ENCODE measurements at regions of chr11 and their contacts with region 1.

Region 1: DNA sequence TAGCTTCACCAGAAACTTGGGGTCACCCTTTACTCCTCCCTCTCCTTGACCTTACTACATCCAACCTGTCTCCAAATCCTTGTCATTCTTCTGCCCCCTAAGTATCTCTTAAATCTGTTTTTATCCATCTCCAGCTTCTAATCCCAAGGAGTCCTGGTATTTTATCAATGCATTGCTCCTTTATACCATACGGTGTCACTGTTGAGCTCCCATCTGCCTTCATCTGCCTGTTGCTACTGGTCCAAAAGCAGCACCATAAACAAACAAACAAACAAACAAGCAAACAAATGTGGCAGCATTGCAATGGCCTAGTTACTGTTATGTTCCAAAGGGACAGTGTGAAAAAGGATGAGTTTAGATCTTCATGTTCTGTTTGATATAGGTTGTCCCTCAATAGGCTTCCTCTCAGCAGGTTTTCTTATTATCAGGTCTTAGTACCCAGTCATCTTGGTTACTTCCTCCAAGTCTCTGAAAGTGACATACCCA is 34.2 kb downstream of the DNHD1 start:
- DNase-seq: no peak
- H3K4me3 ChIP-seq: no peak overlapping the region
- H3K27ac ChIP-seq: no peak overlapping the region; the same call in 1 of the 2 replicates
- H3K4me1 ChIP-seq: no peaks in the 10 kb centered on the region
- H3K27me3 ChIP-seq: no peaks in the 10 kb centered on the region
- CTCF ChIP-seq: peak in 2 of 3 experiments; percentile 76 to 80; a peak in 3 of 4 replicates
- EP300 ChIP-seq: no peak
- POLR2A ChIP-seq: no peak
- RAD21 ChIP-seq: peak; percentile 81 to 84

Region 2: GRCh38 chr11:6505577-6506240 is 25.6 kb before region 1 on chr11:
- CTCF ChIA-PET with region 1: interaction called, 10 read pairs
- POLR2A ChIA-PET with region 1: no interaction called
- DNase-seq: no peak
- H3K4me3 ChIP-seq: no peak overlapping the region
- H3K27ac ChIP-seq: no peak overlapping the region
- H3K4me1 ChIP-seq: no peaks in the 10 kb centered on the region
- H3K27me3 ChIP-seq: no peaks in the 10 kb centered on the region
- CTCF ChIP-seq: peak in 2 of 3 experiments; percentile 46 to 86; a peak in 2 of 4 replicates
- EP300 ChIP-seq: no peak
- POLR2A ChIP-seq: no peak
- RAD21 ChIP-seq: peak; percentile 51 to 63

Region 3: GRCh38 chr11:6563121-6563619 is 31.9 kb after region 1 on chr11:
- CTCF ChIA-PET with region 1: interaction called, 63 read pairs
- POLR2A ChIA-PET with region 1: no interaction called
- DNase-seq: no peak
- H3K4me3 ChIP-seq: no peak overlapping the region
- H3K27ac ChIP-seq: no peak overlapping the region
- H3K4me1 ChIP-seq: peaks cover 0 to 7% (median 2%) of the 10 kb centered on the region in 4 experiments; a peak in 4 of 7 replicates
- H3K27me3 ChIP-seq: peaks cover 0 to 2% (median 0%) of the 10 kb centered on the region in 4 experiments; a peak in 1 of 7 replicates
- CTCF ChIP-seq: no peak
- EP300 ChIP-seq: no peak
- POLR2A ChIP-seq: no peak
- RAD21 ChIP-seq: no peak

Region 4: GRCh38 chr11:6603287-6604080 is 72.2 kb after region 1 on chr11 and contains the starts of genes ILK and RRP8:
- CTCF ChIA-PET with region 1: interaction called, 23 read pairs
- POLR2A ChIA-PET with region 1: interaction called, 3 read pairs
- DNase-seq: peak in 1 of 2 experiments; percentile 91
- H3K4me3 ChIP-seq: peak within 1 kb of the TSS; percentile 79 to 99 (median 93)
- H3K27ac ChIP-seq: peak within 1 kb of the TSS; percentile 63; the same call in 1 of the 2 replicates
- H3K4me1 ChIP-seq: peaks cover 5 to 21% (median 8%) of the 10 kb centered on the region in 4 experiments; a peak in 6 of 7 replicates
- H3K27me3 ChIP-seq: no peaks in the 10 kb centered on the region
- CTCF ChIP-seq: no peak
- EP300 ChIP-seq: peak in 1 of 2 experiments; percentile 79; a peak in 1 of 3 replicates
- POLR2A ChIP-seq: peak in 1 of 2 experiments; percentile 81; a peak in 2 of 3 replicates
- RAD21 ChIP-seq: peak in 1 of 2 experiments; percentile 17; a peak in 2 of 4 replicates
- total RNA-seq, gene ILK: 91.4 and 103 TPM in 2 replicates
- total RNA-seq, gene RRP8: 14.9 and 15.4 TPM in 2 replicates

Region 5: GRCh38 chr11:6682936-6683861 is 151.9 kb after region 1 on chr11 and contains the start of gene MRPL17:
- CTCF ChIA-PET with region 1: interaction called, 11 read pairs
- POLR2A ChIA-PET with region 1: interaction called, 4 read pairs
- DNase-seq: peak; percentile 97 to 98
- H3K4me3 ChIP-seq: peak within 1 kb of the TSS; percentile 90 to 99 (median 98)
- H3K27ac ChIP-seq: peak within 1 kb of the TSS; percentile 97
- H3K4me1 ChIP-seq: peaks cover 2 to 8% (median 5%) of the 10 kb centered on the region in 4 experiments; a peak in 4 of 7 replicates
- H3K27me3 ChIP-seq: no peaks in the 10 kb centered on the region; a peak in 1 of 7 replicates
- CTCF ChIP-seq: peak; percentile 53 to 82 (median 80)
- EP300 ChIP-seq: no peak
- POLR2A ChIP-seq: peak; percentile 87 to 98
- RAD21 ChIP-seq: peak; percentile 61 to 64; a peak in 3 of 4 replicates
- total RNA-seq, gene MRPL17: 70.5 and 71.7 TPM in 2 replicates

Region 6: GRCh38 chr11:6695377-6695776 is 164.1 kb after region 1 on chr11:
- CTCF ChIA-PET with region 1: no interaction called
- POLR2A ChIA-PET with region 1: no interaction called
- DNase-seq: no peak
- H3K4me3 ChIP-seq: no peak overlapping the region
- H3K27ac ChIP-seq: no peak overlapping the region
- H3K4me1 ChIP-seq: no peaks in the 10 kb centered on the region
- H3K27me3 ChIP-seq: no peaks in the 10 kb centered on the region; a peak in 1 of 7 replicates
- CTCF ChIP-seq: no peak
- EP300 ChIP-seq: no peak
- POLR2A ChIP-seq: no peak
- RAD21 ChIP-seq: no peak